ENCODE measurements at regions of chr12 and their contacts with region 1.

Region 1: DNA sequence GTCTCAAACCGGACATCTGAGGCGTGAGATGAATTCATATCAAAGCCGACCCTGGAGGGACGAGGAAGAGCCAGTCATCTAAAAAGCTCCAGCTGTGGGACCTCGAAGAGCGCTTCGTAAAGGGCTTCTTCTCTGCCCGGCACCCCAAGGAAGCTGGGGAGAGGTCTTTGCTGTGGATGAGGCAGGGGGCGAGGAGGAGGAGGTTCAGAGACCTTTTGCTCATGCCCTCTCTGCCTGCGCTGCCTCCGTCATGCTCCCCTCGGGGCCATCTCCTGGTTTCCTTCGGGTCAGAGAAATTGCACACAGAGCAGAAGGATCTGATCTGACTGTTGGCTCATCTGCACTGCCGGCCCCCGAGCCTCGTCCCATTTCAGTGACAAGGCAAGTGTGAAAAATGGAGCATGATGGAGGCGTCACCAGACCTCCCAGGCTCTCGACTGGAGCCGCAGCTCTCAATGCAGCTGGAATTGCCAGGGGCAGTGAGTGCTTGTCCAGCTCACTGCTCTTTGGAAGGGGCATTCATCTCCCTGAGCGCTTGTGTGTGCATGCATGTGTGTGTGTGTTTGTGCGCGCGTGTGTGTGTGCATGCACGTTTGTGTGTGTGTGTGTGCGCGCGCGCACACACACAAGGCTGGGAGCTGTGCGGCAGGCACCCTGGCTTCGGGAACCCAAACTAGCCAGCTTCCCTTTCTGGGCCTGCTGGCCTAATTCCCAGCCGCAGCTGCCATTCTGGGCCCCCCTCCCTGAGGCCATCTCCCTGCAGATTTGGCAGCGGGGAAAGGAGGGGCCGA is 9.2 kb downstream of the CABP1 start:
- DNase-seq: no peak
- CTCF ChIP-seq: no peak

Region 2: DNA sequence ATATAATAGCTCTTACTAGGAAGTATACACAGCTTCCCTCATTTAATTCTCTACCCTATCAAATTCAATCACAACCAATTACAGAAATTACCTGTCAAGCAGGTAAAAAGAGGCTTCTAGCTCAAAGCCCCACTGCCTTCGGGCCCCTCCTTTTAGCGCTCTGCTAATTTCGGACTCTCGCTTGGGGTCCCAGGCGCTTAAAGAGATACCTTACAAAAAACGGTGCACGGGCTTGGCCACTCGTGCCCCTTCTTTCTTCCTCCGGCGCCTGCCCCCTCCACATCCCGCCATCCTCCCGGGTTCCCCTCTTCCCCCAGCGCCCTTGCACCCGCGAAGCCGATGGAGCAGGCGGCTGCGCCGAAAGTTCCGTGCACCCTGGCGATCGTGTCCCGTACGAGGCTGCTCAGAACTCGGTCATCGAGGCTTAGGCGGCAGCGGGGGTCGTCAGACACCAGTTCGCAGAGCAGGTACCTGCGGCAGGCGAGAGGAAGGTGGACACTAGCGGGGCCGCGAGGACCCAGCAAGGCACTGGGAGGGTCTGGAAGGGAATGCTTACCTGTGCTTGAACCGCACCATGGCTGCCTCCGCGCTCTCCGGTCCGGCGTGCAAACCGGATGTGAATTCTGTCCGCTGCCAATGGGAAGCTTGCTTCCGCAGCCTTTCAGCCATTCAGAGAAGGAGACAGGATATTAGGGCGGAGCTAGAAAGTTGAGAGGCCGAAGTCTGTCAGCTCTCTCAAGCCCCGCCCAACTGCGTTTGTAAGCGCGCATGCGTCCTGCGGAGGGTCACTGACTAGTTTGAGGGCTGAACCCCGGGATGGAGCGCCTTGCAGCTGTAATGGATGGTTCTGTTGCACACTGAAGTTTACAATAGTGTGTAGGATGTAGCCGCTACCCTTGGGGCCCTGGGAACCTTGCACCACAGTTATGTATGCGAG is 68.6 kb before region 1 on chr12 and contains the start of gene POP5:
- CTCF ChIA-PET with region 1: interaction called, 26 read pairs
- POLR2A ChIA-PET with region 1: no interaction called
- DNase-seq: peak; percentile 95
- CTCF ChIP-seq: no peak

Region 3: DNA sequence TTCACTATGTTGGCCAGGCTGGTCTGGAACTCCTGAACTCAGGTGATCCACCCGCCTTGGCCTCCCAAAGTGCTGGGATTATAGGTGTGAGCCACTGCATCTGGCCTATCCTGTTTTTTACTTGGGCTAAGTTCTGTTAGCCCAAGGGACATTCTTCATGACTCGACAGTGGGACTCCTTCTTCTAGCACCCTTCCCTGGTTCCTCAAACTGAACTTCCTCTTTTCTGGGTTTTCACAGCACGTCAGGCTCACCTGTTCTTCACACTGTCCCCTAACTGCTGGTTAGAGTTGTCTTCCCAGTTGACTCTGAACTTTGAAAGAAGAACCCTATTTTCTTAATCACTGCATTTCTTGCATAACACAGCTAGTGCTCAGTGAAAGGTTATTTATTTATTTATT is 13.2 kb after region 1 on chr12:
- CTCF ChIA-PET with region 1: interaction called, 119 read pairs
- POLR2A ChIA-PET with region 1: interaction called, 4 read pairs
- DNase-seq: peak; percentile 83
- CTCF ChIP-seq: no peak

Region 4: DNA sequence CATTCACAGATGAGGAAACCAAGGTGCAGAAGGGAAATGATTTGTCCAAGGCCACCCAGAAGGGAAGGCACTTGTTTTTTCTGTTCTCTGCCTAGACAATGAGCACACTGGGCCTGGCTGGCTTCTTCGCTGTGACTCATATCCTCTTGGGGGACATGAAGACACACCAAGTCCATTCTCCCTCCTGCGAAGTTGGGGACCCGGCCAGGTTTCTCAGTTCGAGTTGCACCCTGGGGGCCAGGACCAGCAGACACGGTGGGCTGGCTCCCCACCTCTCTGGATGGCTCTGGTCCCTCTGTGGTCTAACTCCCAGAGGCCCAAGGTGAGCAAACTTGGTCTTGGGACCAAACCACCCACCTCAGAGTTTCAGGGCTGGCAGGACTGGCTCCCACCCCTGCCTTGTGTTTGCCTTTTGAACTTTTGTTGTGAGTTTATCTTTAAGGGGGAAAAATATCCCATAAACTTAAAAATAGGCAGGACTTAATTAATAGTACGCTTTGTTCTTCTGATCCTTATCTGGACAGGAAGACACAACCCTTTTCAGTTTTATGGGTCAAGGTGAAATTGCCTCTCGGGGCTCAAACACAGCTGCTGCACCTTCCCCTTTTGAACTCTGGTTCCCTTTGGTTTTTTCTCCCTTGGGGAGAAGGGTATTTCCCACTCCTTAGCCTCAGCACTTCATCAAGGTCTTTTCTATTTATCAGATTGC is 28.3 kb after region 1 on chr12:
- CTCF ChIA-PET with region 1: interaction called, 96 read pairs
- POLR2A ChIA-PET with region 1: no interaction called
- DNase-seq: peak; percentile 64
- CTCF ChIP-seq: no peak

Region 5: GRCh38 chr12:120698665-120699064 is 49.0 kb after region 1 on chr12:
- CTCF ChIA-PET with region 1: interaction called, 61 read pairs
- POLR2A ChIA-PET with region 1: no interaction called
- DNase-seq: no peak
- CTCF ChIP-seq: no peak

Region 6: DNA sequence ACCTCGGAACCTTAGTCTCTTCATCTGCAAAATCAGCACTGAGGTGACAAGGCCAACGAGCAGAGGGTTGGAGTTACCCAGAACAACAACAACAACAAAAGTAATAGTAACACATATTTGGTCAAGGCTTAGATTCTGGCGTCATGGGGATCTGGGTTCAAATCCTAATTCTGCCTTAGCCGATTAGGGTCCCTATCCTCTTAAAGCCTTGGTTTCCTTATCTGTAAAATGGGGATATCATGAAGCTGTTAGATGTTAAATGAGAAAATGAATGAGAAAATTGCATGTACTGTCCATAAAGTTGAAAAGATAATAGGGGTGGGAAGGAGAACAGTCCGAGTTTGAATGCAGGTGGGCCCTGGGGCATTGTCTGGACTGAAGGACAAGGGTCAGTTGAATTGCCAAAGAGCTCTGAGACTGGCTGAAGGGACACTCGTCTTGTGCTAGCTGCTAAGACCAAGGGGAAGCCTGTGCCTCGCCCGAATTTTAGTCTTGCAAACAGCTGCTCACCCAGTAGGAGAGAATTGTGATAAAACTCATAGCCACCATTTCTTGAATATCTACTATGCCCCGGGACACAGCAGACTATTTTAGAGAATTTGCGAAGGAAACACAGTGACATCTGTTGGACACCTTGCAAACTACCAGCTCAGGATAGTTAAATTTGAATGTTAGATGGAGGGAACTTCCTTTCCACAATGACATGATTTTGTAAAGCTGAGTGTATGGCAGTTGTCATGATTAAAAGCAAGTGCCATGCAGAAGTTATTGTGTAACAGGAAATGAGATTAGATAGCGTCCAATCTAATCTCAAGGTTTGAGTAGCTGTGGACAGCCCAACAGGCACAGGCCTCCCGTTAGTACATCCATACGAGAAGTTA is 321.9 kb after region 1 on chr12:
- CTCF ChIA-PET with region 1: interaction called, 70 read pairs
- POLR2A ChIA-PET with region 1: no interaction called
- DNase-seq: peak; percentile 80
- CTCF ChIP-seq: peak; percentile 73